IMR-90 (cell line): ENCODE measurements at regions of chr12 and their contacts with region 1.

Region 1: DNA sequence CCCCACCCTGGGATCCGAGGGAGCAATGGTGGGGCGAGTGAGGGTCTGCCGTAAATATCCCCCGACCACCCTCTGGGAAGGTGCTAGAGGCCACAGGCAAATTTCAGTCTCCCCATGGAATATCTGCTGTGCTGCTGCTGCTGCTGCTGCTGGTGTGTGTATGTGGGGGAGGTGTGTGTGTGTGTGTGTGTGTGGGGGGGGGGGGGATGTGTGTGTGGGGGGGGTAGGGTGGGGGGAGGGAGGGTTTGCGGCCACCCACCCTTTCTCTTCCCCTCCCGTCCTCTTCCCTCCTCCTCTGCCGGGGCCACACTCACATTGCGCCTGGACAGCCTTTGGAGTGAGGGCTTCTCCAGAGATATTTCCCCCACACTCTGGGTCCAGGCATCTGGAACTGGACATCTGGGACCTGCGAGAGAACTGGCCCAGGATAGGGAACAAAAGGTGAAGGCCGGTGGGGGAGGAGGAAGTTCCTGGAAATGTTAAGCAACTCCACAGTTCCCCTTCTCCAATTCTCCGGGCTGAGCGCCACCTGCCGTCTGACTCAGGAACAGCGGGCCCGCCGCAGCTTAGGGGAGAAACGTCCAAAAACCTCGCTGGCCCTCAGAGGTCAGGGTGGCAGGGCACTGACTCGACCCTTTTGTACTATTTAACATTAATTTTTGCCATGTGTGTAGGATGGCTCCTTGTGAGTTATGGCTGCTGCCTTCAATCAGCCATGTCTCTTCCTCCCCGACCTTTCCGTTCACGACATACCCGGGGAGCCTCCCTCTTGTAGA is at the start of gene C1RL:
- DNase-seq: peak; percentile 77
- ATAC-seq: peak; percentile 58
- H3K4me3 ChIP-seq: peak within 1 kb of the TSS; percentile 66
- H3K27ac ChIP-seq: peak within 1 kb of the TSS; percentile 97
- H3K4me1 ChIP-seq: peaks cover 5% of the 10 kb centered on the region; the same call in 1 of the 2 replicates
- H3K27me3 ChIP-seq: no peaks in the 10 kb centered on the region
- CTCF ChIP-seq: peak; percentile 93
- POLR2A ChIP-seq: peak; percentile 15; the same call in 1 of the 2 replicates
- RAD21 ChIP-seq: peak; percentile 79
- total RNA-seq, gene C1RL: 7.5 and 9.1 TPM in 2 replicates

Region 2: GRCh38 chr12:7083125-7083524 is 25.9 kb before region 1 on chr12:
- CTCF ChIA-PET with region 1: no interaction called
- POLR2A ChIA-PET with region 1: no interaction called
- dilution Hi-C with region 1: no loop called
- in situ Hi-C with region 1: no loop called
- intact Hi-C with region 1: no loop called
- DNase-seq: no peak
- ATAC-seq: no peak
- H3K4me3 ChIP-seq: no peak overlapping the region
- H3K27ac ChIP-seq: no peak overlapping the region
- H3K4me1 ChIP-seq: peaks cover 8% of the 10 kb centered on the region; the same call in 1 of the 2 replicates
- H3K27me3 ChIP-seq: no peaks in the 10 kb centered on the region
- CTCF ChIP-seq: no peak
- POLR2A ChIP-seq: no peak
- RAD21 ChIP-seq: no peak

Region 3: GRCh38 chr12:7142056-7142644 is 33.2 kb after region 1 on chr12:
- CTCF ChIA-PET with region 1: no interaction called
- POLR2A ChIA-PET with region 1: no interaction called
- dilution Hi-C with region 1: no loop called
- in situ Hi-C with region 1: no loop called
- intact Hi-C with region 1: loop called (anchors 1 kb)
- DNase-seq: peak; percentile 39
- ATAC-seq: peak; percentile 91
- H3K4me3 ChIP-seq: no peak overlapping the region
- H3K27ac ChIP-seq: no peak overlapping the region
- H3K4me1 ChIP-seq: peaks cover 2% of the 10 kb centered on the region; the same call in 1 of the 2 replicates
- H3K27me3 ChIP-seq: no peaks in the 10 kb centered on the region
- CTCF ChIP-seq: peak; percentile 71
- POLR2A ChIP-seq: no peak
- RAD21 ChIP-seq: peak; percentile 58